Activated CD4-positive, alpha-beta T cell treated with anti-CD3 and anti-CD28 coated beads for 36 hours (primary cell): ENCODE measurements at regions of chr19 and their contacts with region 1.

Region 1: DNA sequence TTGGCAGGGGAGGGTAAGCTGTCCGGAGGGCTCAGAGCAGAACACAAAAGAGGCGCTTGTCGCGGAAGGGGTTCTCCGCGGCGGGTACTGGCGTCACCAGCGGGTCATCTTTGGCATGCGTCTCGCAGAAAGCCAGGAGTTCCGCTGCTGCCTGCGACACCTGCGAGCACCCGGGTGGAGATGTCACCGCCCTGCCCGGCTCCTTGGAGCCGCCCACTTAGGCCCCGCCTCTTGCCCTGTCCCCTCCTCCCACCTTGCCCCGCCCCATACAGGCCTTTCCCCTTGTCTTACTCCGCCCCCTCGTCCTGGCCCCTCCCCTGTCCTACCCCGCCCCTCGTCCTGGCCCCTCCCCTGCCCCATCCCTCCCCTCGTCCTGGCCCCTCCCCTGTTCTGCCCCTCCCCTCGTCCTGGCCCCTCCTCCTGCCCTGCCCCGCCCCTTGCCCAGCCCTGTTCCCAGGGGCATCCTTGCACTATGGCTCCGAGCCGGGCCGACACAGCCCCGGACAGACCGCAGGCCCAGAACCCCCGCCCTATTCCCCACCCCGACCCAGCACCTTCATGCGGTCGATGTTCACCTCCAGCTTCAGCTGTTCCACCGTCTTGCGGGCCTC is 1.9 kb downstream of the GNG8 start:
- DNase-seq: peak; percentile 99
- ATAC-seq: peak; percentile 63
- H3K4me3 Mint-ChIP-seq: peak overlapping the region; percentile 73
- H3K27ac Mint-ChIP-seq: peak overlapping the region; percentile 72
- H3K4me1 Mint-ChIP-seq: peaks cover 21% of the 10 kb centered on the region
- H3K27me3 Mint-ChIP-seq: no peaks in the 10 kb centered on the region

Region 2: GRCh38 chr19:45842198-45842597 is 792.0 kb before region 1 on chr19:
- CTCF ChIA-PET with region 1: no interaction called
- POLR2A ChIA-PET with region 1: no interaction called
- intact Hi-C with region 1: no loop called
- DNase-seq: no peak
- ATAC-seq: no peak
- H3K4me3 Mint-ChIP-seq: no peak overlapping the region
- H3K27ac Mint-ChIP-seq: no peak overlapping the region
- H3K4me1 Mint-ChIP-seq: no peaks in the 10 kb centered on the region
- H3K27me3 Mint-ChIP-seq: no peaks in the 10 kb centered on the region

Region 3: DNA sequence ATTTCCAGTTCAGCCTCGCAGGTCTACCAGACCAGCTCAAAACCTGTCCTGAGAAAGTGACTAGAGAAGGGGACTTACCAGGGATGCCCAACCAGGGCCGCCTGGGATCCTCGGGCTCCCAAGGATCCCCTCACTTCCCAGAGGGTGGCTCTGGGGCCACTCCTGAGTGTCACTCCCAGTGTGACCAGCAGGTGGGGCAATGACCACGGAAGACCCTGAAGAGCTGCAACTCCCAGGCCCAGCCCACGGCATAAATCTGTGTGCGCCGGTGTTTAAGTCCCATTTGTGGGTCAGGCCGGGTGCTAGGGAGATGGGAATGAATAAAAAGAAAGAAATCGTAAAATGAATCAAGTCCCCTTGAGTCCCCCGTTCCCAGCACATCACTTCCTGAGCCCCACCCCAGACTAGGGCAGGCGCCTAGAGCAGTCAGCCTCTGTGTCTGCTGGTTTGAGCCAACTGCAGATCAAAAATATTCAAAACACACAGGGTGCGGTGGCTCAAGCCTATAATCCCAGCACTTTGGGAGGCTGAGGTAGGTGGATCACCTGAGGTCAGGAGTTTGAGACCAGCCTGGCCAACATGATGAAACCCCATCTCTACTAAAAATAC is 19.9 kb before region 1 on chr19:
- CTCF ChIA-PET with region 1: interaction called, 11 read pairs
- POLR2A ChIA-PET with region 1: interaction called, 14 read pairs
- intact Hi-C with region 1: loop called in 1 of 2 experiments (anchors 1 kb)
- DNase-seq: peak; percentile 92
- ATAC-seq: peak; percentile 49
- H3K4me3 Mint-ChIP-seq: no peak overlapping the region
- H3K27ac Mint-ChIP-seq: peak overlapping the region; percentile 62
- H3K4me1 Mint-ChIP-seq: peaks cover 82% of the 10 kb centered on the region
- H3K27me3 Mint-ChIP-seq: no peaks in the 10 kb centered on the region

Region 4: DNA sequence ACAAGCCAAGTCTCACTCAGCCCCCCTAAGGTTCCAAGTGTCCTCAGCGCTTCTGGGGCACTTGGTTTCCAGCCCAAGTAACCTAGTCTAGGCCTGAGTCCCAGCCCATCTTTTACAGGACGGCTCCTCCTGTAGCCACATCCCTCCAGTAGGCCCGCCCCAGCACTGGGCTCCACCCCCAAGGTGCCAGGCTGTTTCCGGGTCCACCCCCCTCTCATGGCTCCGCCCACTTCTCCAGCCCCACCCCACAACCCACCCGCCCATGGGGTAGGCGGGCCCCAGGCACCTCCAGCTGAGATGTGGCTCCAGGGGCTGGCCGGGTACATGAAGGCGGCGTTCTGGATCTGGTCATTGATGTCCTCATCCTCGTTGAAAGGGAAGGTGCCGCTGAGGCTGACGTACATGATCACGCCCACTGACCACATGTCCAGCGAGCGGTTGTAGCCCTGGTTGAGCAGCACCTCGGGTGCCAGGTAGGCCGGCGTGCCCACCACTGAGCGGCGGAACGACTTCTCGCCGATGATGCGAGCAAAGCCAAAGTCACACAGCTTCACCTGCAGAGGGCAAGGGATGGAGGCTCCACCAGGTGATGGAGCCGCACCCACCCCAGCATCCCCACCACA is 44.1 kb after region 1 on chr19:
- CTCF ChIA-PET with region 1: interaction called, 4 read pairs
- POLR2A ChIA-PET with region 1: no interaction called
- intact Hi-C with region 1: loop called in 1 of 2 experiments (anchors 1 kb)
- DNase-seq: peak; percentile 83
- ATAC-seq: peak; percentile 95
- H3K4me3 Mint-ChIP-seq: no peak overlapping the region
- H3K27ac Mint-ChIP-seq: peak overlapping the region; percentile 73
- H3K4me1 Mint-ChIP-seq: peaks cover 15% of the 10 kb centered on the region
- H3K27me3 Mint-ChIP-seq: no peaks in the 10 kb centered on the region

Region 5: GRCh38 chr19:46717034-46717723 is 83.0 kb after region 1 on chr19 and contains the start of gene PRKD2:
- CTCF ChIA-PET with region 1: no interaction called
- POLR2A ChIA-PET with region 1: no interaction called
- intact Hi-C with region 1: loop called in 1 of 2 experiments (anchors 1 kb)
- DNase-seq: peak; percentile 95
- ATAC-seq: peak; percentile 66
- H3K4me3 Mint-ChIP-seq: peak within 1 kb of the TSS; percentile 94
- H3K27ac Mint-ChIP-seq: peak within 1 kb of the TSS; percentile 95
- H3K4me1 Mint-ChIP-seq: peaks cover 40% of the 10 kb centered on the region
- H3K27me3 Mint-ChIP-seq: no peaks in the 10 kb centered on the region
- total RNA-seq, gene PRKD2: 76.0 to 78.3 TPM